ENCODE measurements at regions of chr12 and their contacts with region 1.

Region 1: DNA sequence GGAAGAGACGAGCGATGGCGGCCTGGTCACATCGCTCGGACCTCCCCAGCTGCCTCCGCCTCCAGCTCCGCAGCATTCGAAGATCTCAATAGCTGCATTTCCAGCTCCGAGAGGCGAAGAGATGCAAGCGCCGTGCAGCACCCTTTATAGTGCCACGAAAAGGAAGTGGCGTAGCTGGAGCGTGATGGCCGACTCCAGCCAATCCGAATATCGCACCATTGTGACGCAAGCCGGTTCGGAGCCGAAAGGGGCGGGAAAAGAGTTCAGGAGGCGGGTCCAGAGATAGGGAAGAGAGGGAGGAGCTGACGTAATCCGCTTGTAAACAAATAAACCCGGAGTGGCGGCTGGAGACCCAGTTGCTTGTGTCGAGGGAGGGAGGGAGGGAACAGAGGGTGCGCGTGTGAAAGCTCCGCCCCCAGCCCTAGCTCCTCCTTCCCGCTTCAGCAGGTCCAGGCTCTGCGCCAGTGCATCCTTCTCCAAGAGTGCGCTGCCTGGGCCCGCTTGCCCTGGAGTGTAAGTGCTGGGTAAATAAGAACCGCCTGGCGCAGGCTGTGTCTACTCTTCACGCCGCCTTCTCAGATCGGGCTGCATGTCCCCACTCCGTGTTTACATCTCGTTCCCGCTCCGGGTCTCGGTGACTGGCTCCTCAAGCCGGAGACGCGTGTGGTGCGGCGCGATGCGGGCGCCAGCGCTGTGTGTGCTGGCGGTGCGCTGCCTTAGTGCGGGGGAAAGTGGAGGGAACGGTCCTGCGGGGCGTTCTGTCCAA is at the start of gene BTG1:
- DNase-seq: peak; percentile 98 to 100
- H3K4me3 ChIP-seq: peak within 1 kb of the TSS; percentile 86 to 93 (median 88)
- H3K27ac ChIP-seq: peak within 1 kb of the TSS; percentile 93
- H3K4me1 ChIP-seq: peaks cover 2 to 4% (median 3%) of the 10 kb centered on the region in 4 experiments; a peak in 4 of 7 replicates
- H3K27me3 ChIP-seq: no peaks in the 10 kb centered on the region
- CTCF ChIP-seq: no peak
- EP300 ChIP-seq: no peak
- POLR2A ChIP-seq: peak; percentile 100
- RAD21 ChIP-seq: 0 out of 4 replicates have a peak, but pooled peaks of 1 of the 2 experiments have one; percentile 9
- total RNA-seq, gene BTG1: 31.6 and 32.7 TPM in 2 replicates

Region 2: DNA sequence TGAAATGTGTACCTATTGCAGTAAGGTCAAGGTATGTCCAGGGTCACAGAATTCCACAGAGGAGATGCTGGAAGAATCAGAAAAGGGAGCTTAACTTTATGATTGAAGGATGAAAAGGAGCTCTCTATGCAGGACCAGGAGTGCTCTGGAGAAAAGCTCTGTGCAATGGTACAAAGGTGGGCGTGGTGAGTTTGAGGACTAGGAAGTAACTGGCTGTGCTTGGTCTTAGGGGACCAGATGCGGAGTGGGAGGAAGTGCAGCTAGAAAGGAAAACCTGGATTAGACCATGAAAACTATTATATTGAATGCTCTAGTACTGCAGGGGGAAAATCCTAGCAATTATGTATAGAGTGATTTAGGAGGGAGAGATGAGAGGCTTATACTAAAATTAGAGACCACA is 57.1 kb before region 1 on chr12:
- CTCF ChIA-PET with region 1: interaction called, 3 read pairs
- POLR2A ChIA-PET with region 1: interaction called, 19 read pairs
- DNase-seq: no peak
- H3K4me3 ChIP-seq: no peak overlapping the region
- H3K27ac ChIP-seq: no peak overlapping the region
- H3K4me1 ChIP-seq: no peaks in the 10 kb centered on the region
- H3K27me3 ChIP-seq: no peaks in the 10 kb centered on the region
- CTCF ChIP-seq: no peak
- EP300 ChIP-seq: no peak
- POLR2A ChIP-seq: no peak
- RAD21 ChIP-seq: no peak

Region 3: DNA sequence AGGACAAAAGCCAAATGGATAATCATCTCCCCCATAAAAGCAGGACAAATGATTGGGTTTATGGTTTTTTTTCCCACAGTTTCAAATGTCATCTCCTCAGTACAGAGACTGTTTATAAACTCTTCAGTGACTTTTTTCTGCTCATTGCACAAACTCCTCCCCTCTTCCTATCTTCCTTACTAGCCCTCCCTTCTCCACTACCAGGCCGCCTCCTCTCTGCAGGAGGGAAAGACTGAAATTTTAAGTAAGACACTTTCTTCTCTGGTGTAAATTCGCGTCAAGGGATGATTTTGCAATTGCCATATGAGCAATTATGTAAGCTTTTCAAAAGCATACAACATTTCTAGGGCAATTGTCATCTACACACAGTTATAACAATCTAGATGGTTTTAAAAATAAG is 37.3 kb before region 1 on chr12:
- CTCF ChIA-PET with region 1: interaction called, 6 read pairs
- POLR2A ChIA-PET with region 1: interaction called, 40 read pairs
- DNase-seq: no peak
- H3K4me3 ChIP-seq: no peak overlapping the region
- H3K27ac ChIP-seq: no peak overlapping the region
- H3K4me1 ChIP-seq: peaks cover 6 to 23% (median 17%) of the 10 kb centered on the region in 4 experiments
- H3K27me3 ChIP-seq: no peaks in the 10 kb centered on the region
- CTCF ChIP-seq: no peak
- EP300 ChIP-seq: no peak
- POLR2A ChIP-seq: no peak
- RAD21 ChIP-seq: no peak

Region 4: GRCh38 chr12:92123780-92124688 is 21.9 kb before region 1 on chr12:
- CTCF ChIA-PET with region 1: interaction called, 4 read pairs
- POLR2A ChIA-PET with region 1: interaction called, 17 read pairs
- DNase-seq: no peak
- H3K4me3 ChIP-seq: no peak overlapping the region
- H3K27ac ChIP-seq: no peak overlapping the region
- H3K4me1 ChIP-seq: peaks cover 0 to 4% (median 1%) of the 10 kb centered on the region in 4 experiments; a peak in 3 of 7 replicates
- H3K27me3 ChIP-seq: no peaks in the 10 kb centered on the region
- CTCF ChIP-seq: no peak
- EP300 ChIP-seq: no peak
- POLR2A ChIP-seq: no peak
- RAD21 ChIP-seq: no peak

Region 5: GRCh38 chr12:92129609-92130008 is 16.3 kb before region 1 on chr12:
- CTCF ChIA-PET with region 1: interaction called, 8 read pairs
- POLR2A ChIA-PET with region 1: interaction called, 119 read pairs
- DNase-seq: no peak
- H3K4me3 ChIP-seq: no peak overlapping the region
- H3K27ac ChIP-seq: no peak overlapping the region
- H3K4me1 ChIP-seq: peaks cover 0 to 6% (median 2%) of the 10 kb centered on the region in 4 experiments; a peak in 3 of 7 replicates
- H3K27me3 ChIP-seq: no peaks in the 10 kb centered on the region
- CTCF ChIP-seq: no peak
- EP300 ChIP-seq: no peak
- POLR2A ChIP-seq: no peak; a peak in 1 of 3 replicates
- RAD21 ChIP-seq: no peak

Region 6: GRCh38 chr12:92356425-92356824 is 210.5 kb after region 1 on chr12:
- CTCF ChIA-PET with region 1: no interaction called
- POLR2A ChIA-PET with region 1: no interaction called
- DNase-seq: no peak
- H3K4me3 ChIP-seq: no peak overlapping the region
- H3K27ac ChIP-seq: no peak overlapping the region
- H3K4me1 ChIP-seq: no peaks in the 10 kb centered on the region
- H3K27me3 ChIP-seq: no peaks in the 10 kb centered on the region
- CTCF ChIP-seq: no peak
- EP300 ChIP-seq: no peak
- POLR2A ChIP-seq: no peak
- RAD21 ChIP-seq: no peak

Measured in H1 (cell line).